ENCODE measurements at regions of chr2 and their contacts with region 1.

Region 1: DNA sequence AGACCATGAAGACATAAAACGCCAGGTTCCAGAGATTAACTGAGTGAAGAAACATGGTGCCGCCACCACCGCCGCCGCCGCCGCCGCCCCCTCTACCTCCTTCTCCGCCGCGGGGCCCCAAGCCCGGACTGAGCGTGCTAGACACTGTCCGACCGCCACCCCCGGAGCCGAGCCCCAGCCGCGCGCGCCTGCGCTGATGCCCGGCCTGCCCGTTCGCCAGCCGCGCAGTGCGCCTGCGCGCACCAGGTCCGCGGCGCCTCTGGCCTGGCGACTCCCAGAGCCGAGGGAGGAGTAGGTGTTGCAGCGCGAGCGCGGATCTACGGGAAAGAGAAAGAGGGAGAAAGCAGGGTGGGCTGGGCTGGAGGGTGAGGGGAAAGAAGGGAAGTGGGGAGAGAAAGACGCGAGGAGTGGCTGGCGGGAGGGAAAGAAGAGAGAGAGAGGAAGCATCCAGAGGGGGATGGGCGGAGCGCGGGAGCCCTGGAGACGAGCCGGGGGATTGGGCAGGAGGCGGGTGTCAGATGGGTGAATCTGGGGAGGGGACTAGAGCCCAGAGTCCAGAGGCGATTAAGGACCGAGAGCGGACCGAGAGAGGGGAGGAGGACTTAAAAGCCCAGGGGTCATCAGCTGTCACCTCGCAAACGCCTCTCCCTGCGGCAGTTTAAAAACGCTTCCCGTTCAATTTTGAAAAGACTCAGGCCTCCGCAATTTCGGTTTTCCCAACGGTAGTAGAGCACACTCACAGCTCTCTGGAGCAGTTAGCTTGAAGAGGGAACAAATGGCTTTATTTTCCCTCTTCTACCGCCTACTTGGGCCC is at the start of gene PGAP1:
- DNase-seq: peak; percentile 66 to 95 (median 72)
- ATAC-seq: peak; percentile 89
- H3K4me3 ChIP-seq: peak within 1 kb of the TSS; percentile 91
- H3K4me3 Mint-ChIP-seq: peak within 1 kb of the TSS; percentile 85 to 100 (median 96)
- H3K27ac ChIP-seq: peak within 1 kb of the TSS; percentile 79
- H3K27ac Mint-ChIP-seq: peak within 1 kb of the TSS; percentile 90 to 97 (median 94)
- H3K4me1 ChIP-seq: peaks cover 4 to 6% of the 10 kb centered on the region in 2 donors
- H3K4me1 Mint-ChIP-seq: peaks cover 22 to 43% (median 39%) of the 10 kb centered on the region in 7 donors
- H3K27me3 ChIP-seq: no peaks in the 10 kb centered on the region
- H3K27me3 Mint-ChIP-seq: peaks cover 0 to 2% (median 0%) of the 10 kb centered on the region in 5 donors
- total RNA-seq, gene PGAP1: 6.0 to 48.4 (median 6.9) TPM

Region 2: DNA sequence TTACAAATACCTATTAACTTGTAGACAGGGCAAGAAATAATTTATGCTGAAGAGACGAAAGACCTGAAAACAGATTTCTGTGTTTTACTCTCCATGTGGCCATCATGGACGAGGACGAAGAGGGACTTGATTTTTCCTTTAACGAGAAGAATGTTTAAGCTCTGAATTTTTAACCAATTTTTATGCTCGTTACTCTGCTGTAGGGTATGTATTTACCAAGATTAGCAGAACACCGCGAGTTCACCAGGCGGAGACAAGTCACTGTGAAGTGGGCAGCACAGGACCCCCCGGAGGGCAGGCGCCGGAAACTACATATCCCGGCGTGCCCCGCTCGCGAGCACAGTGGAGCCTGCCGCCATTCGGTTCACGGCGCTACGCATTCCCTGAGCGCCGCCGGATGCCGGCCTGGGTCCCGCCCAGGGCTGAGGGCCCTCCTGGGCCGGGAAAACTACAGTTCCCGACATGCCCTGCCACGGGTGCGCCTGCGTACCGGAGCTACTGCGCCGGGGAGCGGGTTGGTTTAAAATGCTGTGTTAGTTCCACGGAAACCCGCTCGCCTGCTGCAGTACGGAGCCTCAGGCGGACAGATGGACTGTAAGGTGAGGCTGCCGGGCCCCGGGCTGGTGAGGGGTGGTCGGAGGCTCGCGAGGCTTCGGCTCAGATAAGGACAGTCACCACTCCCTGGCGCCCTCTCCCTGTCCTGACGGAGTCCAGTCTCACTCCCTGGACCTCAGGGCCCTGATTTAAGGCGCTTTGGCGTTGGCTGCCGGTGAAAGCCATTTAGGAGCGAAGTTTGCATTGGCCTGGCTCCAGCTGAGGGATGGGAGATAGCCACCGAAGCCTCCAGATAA is 287.4 kb before region 1 on chr2 and contains the start of gene CCDC150:
- CTCF ChIA-PET with region 1: no interaction called
- POLR2A ChIA-PET with region 1: no interaction called
- intact Hi-C with region 1: loop called in 1 of 2 experiments (anchors 10 kb)
- DNase-seq: peak; percentile 88 to 95 (median 94)
- ATAC-seq: peak; percentile 100
- H3K4me3 ChIP-seq: peak within 1 kb of the TSS; percentile 86
- H3K4me3 Mint-ChIP-seq: peak within 1 kb of the TSS; percentile 82 to 92 (median 88)
- H3K27ac ChIP-seq: peak within 1 kb of the TSS; percentile 48
- H3K27ac Mint-ChIP-seq: peak within 1 kb of the TSS in 8 of 9 donors; percentile 30 to 78 (median 43)
- H3K4me1 ChIP-seq: peaks cover 7 to 8% of the 10 kb centered on the region in 2 donors
- H3K4me1 Mint-ChIP-seq: peaks cover 4 to 26% (median 19%) of the 10 kb centered on the region in 7 donors
- H3K27me3 ChIP-seq: no peaks in the 10 kb centered on the region
- H3K27me3 Mint-ChIP-seq: peaks cover 0 to 15% (median 0%) of the 10 kb centered on the region in 5 donors
- total RNA-seq, gene CCDC150: 0.13 to 11.2 (median 1.2) TPM

Region 3: DNA sequence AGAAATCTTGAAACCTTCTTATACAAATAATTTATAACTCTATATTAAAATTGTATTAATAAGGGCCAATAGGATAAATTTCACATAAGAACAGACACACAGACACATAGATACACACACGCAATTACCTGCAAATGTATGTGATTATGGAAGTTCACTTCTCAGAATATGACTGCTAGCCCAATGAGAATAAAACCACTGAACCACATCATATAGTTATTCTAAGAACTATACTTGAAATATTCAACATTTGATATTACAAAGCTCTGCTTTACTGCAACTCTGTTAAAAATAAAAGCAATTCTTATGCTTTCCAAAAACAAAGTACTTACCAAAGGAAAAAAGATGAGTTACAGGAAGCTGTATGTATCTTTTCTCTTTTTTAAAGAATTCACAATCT is 51.4 kb before region 1 on chr2:
- CTCF ChIA-PET with region 1: interaction called, 3 read pairs
- POLR2A ChIA-PET with region 1: no interaction called
- intact Hi-C with region 1: loop called (anchors 10 kb)
- DNase-seq: no peak
- ATAC-seq: no peak
- H3K4me3 ChIP-seq: no peak overlapping the region
- H3K4me3 Mint-ChIP-seq: no peak overlapping the region
- H3K27ac ChIP-seq: no peak overlapping the region
- H3K27ac Mint-ChIP-seq: no peak overlapping the region
- H3K4me1 ChIP-seq: no peaks in the 10 kb centered on the region
- H3K4me1 Mint-ChIP-seq: peaks cover 0 to 43% (median 4%) of the 10 kb centered on the region in 7 donors
- H3K27me3 ChIP-seq: no peaks in the 10 kb centered on the region
- H3K27me3 Mint-ChIP-seq: no peaks in the 10 kb centered on the region

Region 4: GRCh38 chr2:196961889-196962288 is 35.1 kb after region 1 on chr2:
- CTCF ChIA-PET with region 1: no interaction called
- POLR2A ChIA-PET with region 1: no interaction called
- intact Hi-C with region 1: loop called in 1 of 2 experiments (anchors 5 kb)
- DNase-seq: no peak
- ATAC-seq: peak; percentile 54
- H3K4me3 ChIP-seq: no peak overlapping the region
- H3K4me3 Mint-ChIP-seq: peak overlapping the region in 1 of 10 donors; percentile 31
- H3K27ac ChIP-seq: no peak overlapping the region
- H3K27ac Mint-ChIP-seq: peak overlapping the region in 2 of 9 donors; percentile 16 to 47
- H3K4me1 ChIP-seq: no peaks in the 10 kb centered on the region
- H3K4me1 Mint-ChIP-seq: peaks cover 0 to 27% (median 0%) of the 10 kb centered on the region in 7 donors
- H3K27me3 ChIP-seq: no peaks in the 10 kb centered on the region
- H3K27me3 Mint-ChIP-seq: no peaks in the 10 kb centered on the region

Region 5: GRCh38 chr2:197079832-197080555 is 153.2 kb after region 1 on chr2:
- CTCF ChIA-PET with region 1: no interaction called
- POLR2A ChIA-PET with region 1: no interaction called
- intact Hi-C with region 1: no loop called
- DNase-seq: no peak
- ATAC-seq: no peak
- H3K4me3 ChIP-seq: no peak overlapping the region
- H3K4me3 Mint-ChIP-seq: no peak overlapping the region
- H3K27ac ChIP-seq: no peak overlapping the region
- H3K27ac Mint-ChIP-seq: peak overlapping the region in 7 of 9 donors; percentile 18 to 84 (median 42)
- H3K4me1 ChIP-seq: peaks cover 0 to under 1% of the 10 kb centered on the region in 2 donors
- H3K4me1 Mint-ChIP-seq: peaks cover 8 to 29% (median 18%) of the 10 kb centered on the region in 7 donors
- H3K27me3 ChIP-seq: no peaks in the 10 kb centered on the region
- H3K27me3 Mint-ChIP-seq: no peaks in the 10 kb centered on the region

Region 6: GRCh38 chr2:197434541-197435513 is 508.1 kb after region 1 on chr2 and contains the start of gene SF3B1:
- CTCF ChIA-PET with region 1: no interaction called
- POLR2A ChIA-PET with region 1: interaction called, 3 read pairs
- intact Hi-C with region 1: loop called (anchors 2 to 5 kb)
- DNase-seq: peak; percentile 98 to 99 (median 99)
- ATAC-seq: peak; percentile 99
- H3K4me3 ChIP-seq: peak within 1 kb of the TSS; percentile 98
- H3K4me3 Mint-ChIP-seq: peak within 1 kb of the TSS; percentile 88 to 100 (median 98)
- H3K27ac ChIP-seq: peak within 1 kb of the TSS; percentile 98
- H3K27ac Mint-ChIP-seq: peak within 1 kb of the TSS; percentile 100
- H3K4me1 ChIP-seq: peaks cover 28 to 46% of the 10 kb centered on the region in 2 donors
- H3K4me1 Mint-ChIP-seq: peaks cover 34 to 60% (median 49%) of the 10 kb centered on the region in 7 donors
- H3K27me3 ChIP-seq: no peaks in the 10 kb centered on the region
- H3K27me3 Mint-ChIP-seq: peaks cover 0 to 3% (median 0%) of the 10 kb centered on the region in 5 donors
- total RNA-seq, gene SF3B1: 330 to 737 (median 528) TPM